ENCODE measurements at regions of chr6 and their contacts with region 1.

Region 1: DNA sequence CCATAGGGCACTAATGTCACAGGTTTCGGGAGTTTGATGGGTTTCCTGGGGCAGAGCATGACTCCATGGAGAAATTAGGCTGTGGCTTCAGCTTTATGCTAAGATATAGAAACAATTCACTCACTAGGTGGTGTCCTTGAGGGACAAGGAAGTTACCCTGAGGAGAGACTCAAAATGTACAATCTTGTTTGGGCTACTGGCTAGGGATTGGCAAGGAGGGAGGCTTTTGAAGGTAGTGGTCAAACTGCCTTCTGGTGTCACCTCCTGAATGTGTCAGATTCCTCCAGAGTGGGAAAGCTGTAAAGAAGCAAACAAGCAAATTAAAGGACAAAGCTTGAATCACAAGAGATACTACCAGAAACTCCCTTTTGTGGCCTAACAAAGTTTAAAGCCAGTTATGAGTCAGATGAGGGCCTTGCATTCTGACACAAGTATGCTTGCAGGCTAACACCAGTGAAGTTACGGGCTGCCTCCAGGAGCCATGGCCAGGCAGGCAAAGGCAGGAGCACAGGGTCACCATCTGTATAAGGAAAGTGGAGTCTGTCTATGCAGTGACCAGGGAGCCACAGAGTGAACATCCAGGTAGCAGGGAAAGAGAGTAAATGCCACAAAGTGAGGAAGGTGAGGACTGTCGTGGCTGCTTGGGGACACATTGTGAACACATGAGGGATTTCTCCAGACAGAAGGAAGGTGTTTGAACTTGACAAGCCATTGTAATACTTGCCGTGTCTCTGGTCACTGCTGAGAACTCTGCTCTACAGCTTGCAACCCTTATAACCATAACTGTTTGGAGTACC is 107.7 kb upstream of the DTNBP1 start:
- DNase-seq: peak; percentile 12
- H3K4me3 Mint-ChIP-seq: peak overlapping the region; percentile 65
- H3K27ac Mint-ChIP-seq: peak overlapping the region; percentile 98
- H3K4me1 Mint-ChIP-seq: peaks cover 59% of the 10 kb centered on the region
- H3K27me3 Mint-ChIP-seq: no peaks in the 10 kb centered on the region

Region 2: DNA sequence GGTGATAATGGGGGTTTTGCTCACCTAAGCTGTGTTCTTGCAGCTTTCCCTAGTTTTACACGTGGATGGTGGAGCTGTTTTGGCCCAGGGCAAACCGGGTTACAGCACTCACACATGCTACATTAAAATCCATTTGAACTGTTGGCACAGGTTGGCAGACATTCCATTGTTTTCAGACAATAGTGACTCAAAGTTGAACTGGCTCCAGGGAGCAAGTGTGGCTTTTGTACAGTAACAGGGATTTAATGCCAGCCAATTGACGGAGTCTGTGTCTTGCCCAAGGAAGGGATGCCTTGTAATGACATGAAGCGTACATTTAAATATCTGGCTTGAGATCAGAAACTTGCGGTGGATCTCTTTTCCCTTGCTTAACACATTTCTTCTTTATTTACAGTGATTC is 290.8 kb before region 1 on chr6:
- intact Hi-C with region 1: no loop called
- DNase-seq: no peak
- H3K4me3 Mint-ChIP-seq: no peak overlapping the region
- H3K27ac Mint-ChIP-seq: peak overlapping the region; percentile 19
- H3K4me1 Mint-ChIP-seq: peaks cover 46% of the 10 kb centered on the region
- H3K27me3 Mint-ChIP-seq: no peaks in the 10 kb centered on the region

Region 3: DNA sequence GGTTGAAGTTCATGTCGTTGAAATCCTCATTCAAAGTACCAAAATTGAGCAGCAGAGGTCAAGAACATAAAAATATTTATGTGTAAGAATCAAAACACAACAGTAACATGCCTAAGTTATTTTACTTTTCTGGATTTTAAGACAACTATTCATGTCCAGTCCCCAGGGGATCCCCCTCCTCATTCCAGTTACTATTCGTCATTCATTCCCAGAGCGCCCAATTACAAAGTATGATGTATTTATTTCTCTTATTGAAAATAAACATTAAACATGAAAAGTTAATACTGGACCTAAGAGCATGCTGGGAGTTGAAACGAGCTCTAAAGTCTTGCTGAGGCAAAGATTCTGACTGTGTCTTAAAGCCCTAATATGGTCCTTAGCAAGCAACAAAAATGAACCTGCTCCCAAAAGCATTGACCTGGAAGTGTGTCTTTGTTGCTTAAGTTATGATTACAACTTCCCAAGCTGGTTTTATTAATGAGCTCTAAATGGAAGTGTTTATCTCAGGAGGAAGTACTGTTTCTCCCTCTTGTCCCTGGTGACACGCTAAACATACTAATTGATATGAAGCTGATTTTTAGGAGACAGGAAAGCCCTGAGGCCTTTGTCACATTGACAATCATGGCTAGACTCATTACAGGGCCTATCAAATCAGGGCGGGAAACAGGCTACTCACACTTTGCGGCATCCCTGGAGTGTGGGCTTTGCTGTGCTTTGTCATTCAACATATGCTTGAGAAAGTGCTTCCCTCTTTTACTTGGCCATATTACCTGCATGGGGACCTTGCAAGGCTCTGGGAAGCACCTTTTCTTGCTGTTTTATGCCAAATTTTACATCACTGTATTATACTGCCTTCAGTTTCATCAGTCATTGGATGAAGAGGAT is 84.5 kb after region 1 on chr6:
- intact Hi-C with region 1: no loop called
- DNase-seq: no peak
- H3K4me3 Mint-ChIP-seq: no peak overlapping the region
- H3K27ac Mint-ChIP-seq: no peak overlapping the region
- H3K4me1 Mint-ChIP-seq: peaks cover 9% of the 10 kb centered on the region
- H3K27me3 Mint-ChIP-seq: peaks cover 4% of the 10 kb centered on the region

Region 4: DNA sequence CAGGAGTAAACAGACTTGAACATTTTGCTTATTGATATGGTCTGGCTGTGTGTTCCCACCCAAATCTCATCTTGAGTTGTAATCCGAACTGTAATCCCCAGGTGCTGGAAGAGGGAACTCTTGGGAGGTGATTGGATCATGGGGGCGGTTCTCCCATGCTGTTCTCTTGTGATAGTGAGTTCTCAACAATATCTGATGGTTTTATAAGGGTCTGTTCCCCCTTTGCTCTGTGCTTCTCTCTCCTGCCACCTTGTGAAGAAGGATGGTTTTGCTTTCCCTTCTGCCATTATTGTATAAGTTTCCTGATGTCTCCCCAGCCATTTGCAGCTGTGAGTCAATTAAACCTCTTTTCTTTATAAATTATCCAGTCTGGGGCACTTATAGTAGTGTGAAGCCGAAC is 398.3 kb after region 1 on chr6:
- intact Hi-C with region 1: loop called (anchors 10 kb)
- DNase-seq: no peak
- H3K4me3 Mint-ChIP-seq: no peak overlapping the region
- H3K27ac Mint-ChIP-seq: no peak overlapping the region
- H3K4me1 Mint-ChIP-seq: peaks cover 41% of the 10 kb centered on the region
- H3K27me3 Mint-ChIP-seq: peaks cover 3% of the 10 kb centered on the region

Measured in activated T-helper 2 cell treated with anti-CD3 and anti-CD28 coated beads, Interferon-gamma antibody, Interleukin-2, Interleukin-4, amounts not matched to agents 10 μg/mL and 5 μg/mL and 100 μg/mL, durations not matched to agents 14 hours and 24 hours and 36 hours (primary cell).